Right ventricle myocardium inferior (tissue), 1 donor: ENCODE measurements at regions of chr16 and their contacts with region 1.

Region 1: DNA sequence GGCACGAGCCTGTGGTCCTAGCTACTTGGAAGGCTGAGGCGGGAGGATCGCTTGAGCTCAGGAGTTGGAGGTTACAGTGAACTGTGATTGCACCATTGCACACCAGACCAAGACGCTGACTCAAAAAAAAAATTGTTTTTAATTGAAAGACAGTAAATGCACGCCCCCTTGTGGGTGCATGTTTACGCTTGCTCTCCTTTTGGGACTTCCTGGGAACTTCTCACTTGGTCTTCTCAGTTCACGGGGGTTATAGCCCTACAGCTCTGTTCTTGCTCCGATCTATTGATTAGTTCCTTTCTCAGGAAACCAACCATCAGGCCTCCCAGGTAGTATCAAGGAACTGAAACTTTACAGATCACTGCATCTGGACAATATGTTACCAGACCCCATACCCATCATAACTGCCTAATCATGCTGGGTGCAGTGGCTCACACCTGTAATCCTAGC is 14.2 kb upstream of the RIPOR1 start:
- DNase-seq: peak; percentile 81
- ATAC-seq: peak; percentile 75

Region 2: DNA sequence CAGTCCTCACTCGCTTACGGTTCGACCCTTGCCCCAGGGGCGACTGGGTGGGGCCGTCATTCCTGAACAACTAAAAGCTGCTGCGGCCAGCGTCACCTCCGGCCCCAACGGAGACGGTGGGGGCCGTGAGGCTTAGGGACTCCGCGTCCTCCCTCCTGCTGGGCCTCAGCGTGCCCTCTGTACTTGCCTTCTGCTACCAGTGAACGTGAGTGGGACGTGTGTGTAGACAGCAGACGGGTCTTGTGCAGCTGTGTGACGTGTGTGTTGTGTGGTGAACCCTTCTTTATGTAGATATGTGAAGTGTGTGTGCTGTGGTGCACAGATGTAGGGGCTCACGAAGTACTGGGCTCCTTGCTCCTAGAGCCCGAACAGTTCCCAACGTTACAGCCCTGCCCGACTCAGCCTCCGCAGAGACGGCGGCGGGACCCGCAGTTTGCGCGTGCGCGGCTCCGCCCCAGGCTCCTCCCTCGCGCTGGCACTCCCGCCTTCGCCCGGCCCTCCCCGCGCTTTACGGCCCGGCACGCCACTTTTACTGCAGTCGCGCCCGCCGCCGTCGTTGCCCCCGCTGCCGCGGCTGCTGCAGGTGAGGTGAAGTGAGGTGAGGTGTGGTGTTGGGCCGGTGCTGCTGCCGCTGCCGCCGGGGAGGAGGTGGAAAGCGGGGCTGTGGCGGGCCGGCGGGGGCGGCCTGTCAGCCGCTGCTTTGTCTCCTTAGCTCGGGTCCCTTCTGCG is 404.8 kb before region 1 on chr16 and contains the start of gene PHAF1:
- intact Hi-C with region 1: no loop called
- DNase-seq: peak; percentile 96
- ATAC-seq: peak; percentile 98
- total RNA-seq, gene PHAF1: 10.8 TPM

Region 3: DNA sequence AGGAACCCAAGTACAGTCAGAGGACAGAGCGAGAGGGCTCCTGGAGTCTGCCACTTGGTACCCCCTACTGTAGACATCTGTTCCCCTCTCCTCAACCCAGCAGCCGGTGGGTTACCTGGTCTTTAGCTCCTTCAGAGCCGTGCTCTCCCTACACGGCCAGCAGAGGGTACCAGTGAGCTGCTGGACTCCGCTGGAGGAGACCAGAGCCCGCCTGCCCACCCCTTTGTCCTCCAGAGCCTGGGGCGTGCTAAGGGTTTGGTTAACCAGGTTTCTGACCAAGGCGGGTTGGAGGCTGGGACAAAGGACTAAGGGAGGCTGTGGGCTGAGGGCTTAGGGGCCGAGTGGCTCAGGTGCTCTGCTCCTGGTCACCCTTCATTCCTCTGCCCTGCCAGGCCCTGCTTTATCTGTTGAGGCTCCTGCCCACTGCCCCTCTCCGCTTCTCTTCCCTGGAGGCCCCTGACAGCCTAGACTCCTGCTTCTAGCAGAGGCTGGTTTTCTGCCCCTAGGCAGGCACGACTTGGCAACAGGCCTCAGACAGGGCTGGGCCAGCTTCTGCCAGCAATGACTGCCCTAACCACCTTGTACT is 86.2 kb before region 1 on chr16:
- intact Hi-C with region 1: loop called (anchors 2 kb)
- DNase-seq: peak; percentile 84
- ATAC-seq: peak; percentile 76

Region 4: DNA sequence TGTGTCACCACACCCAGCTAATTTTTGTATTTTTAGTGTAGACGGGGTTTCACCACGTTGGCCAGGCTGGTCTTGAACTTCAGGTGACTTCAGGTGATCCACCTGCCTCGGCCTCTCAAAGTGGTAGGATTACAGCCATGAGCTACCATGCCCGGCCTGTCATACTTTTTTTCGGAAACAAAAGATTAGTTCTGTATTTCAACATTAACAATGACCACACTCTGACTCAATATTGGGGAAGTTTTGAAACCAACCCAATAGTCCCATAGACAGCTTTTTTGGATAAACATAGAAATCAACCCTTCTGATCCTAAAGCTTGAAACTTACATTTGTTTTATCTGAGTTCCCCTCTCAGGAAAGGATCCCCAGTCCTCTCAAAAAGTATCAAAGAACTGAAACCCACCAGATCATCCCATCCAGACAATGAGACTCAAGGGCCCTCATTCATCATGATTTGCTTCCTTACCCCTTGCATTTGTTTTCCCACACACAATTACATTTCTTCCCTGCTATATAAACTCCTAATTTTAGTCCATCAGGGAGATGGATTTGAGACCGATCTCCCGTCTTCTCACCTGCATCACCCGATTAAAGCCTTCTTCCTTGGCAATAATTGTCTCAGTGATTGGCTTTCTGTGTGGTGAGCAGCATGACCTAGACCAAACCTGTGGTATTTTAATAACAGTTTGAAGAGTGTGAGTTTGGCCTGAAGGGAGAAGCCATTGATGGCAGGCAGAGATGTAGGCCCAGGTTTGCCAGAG is 23.9 kb before region 1 on chr16:
- intact Hi-C with region 1: loop called (anchors 2 kb)
- DNase-seq: no peak
- ATAC-seq: no peak

Region 5: DNA sequence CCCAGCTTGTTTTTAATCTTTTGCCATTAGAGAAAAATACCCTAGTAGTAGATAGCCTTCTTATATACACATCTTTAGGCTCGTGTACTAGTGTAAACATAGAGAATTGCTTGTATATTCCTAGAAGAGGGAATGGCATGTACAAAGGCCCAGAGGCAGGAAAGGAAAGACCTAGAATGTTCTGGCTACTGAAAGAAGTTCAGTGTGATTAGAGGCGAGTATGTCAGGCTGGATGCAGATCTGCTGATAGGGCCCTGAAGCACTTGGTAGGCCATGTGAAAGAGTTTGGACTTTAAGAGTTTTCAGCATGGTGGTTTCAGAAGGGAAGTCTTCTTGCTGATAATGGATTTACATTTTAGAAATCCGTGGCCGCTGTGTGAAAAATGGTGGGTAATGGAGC is 65.3 kb after region 1 on chr16:
- intact Hi-C with region 1: no loop called
- DNase-seq: no peak
- ATAC-seq: no peak